Transverse colon (tissue), 4 donors: ENCODE measurements at regions of chr19 and their contacts with region 1.

Region 1: GRCh38 chr19:47819858-47820257 is 1.9 kb upstream of the CRX start:
- DNase-seq: no peak
- H3K4me3 ChIP-seq: no peak overlapping the region
- H3K27ac ChIP-seq: no peak overlapping the region
- H3K4me1 ChIP-seq: no peaks in the 10 kb centered on the region
- H3K27me3 ChIP-seq: peaks cover 36% of the 10 kb centered on the region
- CTCF ChIP-seq: no peak
- EP300 ChIP-seq: no peak
- POLR2A ChIP-seq: no peak

Region 2: GRCh38 chr19:47756953-47757608 is 62.8 kb before region 1 on chr19:
- in situ Hi-C with region 1: no loop called
- intact Hi-C with region 1: no loop called
- DNase-seq: peak; percentile 69
- H3K4me3 ChIP-seq: no peak overlapping the region
- H3K27ac ChIP-seq: peak overlapping the region; percentile 59 to 82 (median 76)
- H3K4me1 ChIP-seq: peaks cover 0 to 22% (median 12%) of the 10 kb centered on the region in 4 donors
- H3K27me3 ChIP-seq: no peaks in the 10 kb centered on the region
- CTCF ChIP-seq: no peak
- EP300 ChIP-seq: no peak
- POLR2A ChIP-seq: no peak

Region 3: DNA sequence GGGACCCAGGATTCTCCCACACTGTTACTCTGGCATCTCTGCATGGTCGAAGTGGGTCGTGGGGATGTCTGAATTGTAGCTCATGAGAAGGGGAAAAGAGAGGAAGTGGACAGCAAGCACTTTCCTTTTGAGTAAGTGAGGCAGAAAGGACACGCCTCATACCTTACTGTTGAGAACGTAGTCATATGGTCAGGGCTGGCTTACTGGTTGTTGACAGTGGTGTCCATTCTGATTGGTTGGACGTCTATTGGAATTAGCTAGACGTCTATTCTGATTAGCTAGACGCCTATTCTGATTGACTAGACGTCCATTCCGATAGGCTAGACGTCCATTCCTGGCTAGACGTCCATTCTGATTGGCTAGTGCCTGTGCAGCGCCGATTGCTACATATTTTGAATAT is 586.0 kb after region 1 on chr19:
- in situ Hi-C with region 1: no loop called
- intact Hi-C with region 1: loop called (anchors 5 kb)
- DNase-seq: no peak
- H3K4me3 ChIP-seq: no peak overlapping the region
- H3K27ac ChIP-seq: no peak overlapping the region
- H3K4me1 ChIP-seq: no peaks in the 10 kb centered on the region
- H3K27me3 ChIP-seq: peaks cover 19% of the 10 kb centered on the region
- CTCF ChIP-seq: no peak
- EP300 ChIP-seq: no peak
- POLR2A ChIP-seq: no peak